Astrocyte of the spinal cord (primary cell): ENCODE measurements at regions of chrX and their contacts with region 1.

Region 1: DNA sequence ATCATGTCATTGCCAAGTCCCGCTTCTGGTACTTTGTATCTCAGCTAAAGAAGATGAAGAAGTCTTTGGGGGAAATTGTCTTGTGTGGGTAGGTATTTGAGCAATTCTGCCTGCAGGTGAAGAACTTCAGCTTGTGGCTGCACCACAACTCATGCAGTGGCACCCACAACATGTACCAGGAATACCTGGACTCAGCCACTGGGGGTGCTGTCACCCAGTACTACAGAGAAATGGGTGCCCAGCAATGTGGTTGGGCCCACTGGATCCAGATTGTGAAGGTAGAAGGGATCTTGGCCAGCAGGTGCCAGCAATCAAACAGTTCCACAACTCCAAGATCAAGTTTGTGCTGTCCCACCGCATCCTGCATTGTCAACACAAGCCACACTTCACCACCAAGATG is 238.0 kb downstream of the IL1RAPL2 start:
- DNase-seq: no peak
- H3K4me3 ChIP-seq: no peak overlapping the region
- CTCF ChIP-seq: no peak

Region 2: DNA sequence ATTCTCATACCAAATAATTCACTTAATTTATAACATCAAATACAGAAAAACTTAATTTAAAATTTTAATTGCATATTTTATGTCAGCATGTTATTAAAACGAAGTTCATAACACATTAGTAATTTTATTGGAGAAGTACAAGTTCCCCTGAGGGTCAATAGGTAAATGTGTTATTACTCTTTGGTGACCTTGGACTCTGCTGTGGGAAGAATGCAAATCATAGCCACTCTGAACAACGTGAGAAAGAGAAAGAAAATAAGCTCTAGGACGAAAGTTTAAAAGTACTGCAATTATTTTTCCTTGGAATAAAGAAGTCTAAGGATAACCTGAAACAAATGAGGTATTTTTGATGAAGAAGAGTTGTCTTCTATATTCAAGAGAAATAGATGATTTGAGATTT is 122.8 kb before region 1 on chrX:
- in situ Hi-C with region 1: loop called (anchors 10 kb)
- DNase-seq: no peak
- H3K4me3 ChIP-seq: no peak overlapping the region
- CTCF ChIP-seq: no peak